ENCODE measurements at regions of chr15 and their contacts with region 1.

Region 1: GRCh38 chr15:40038638-40039543 is at the start of gene SRP14:
- DNase-seq: peak; percentile 89 to 95 (median 90)
- H3K4me3 ChIP-seq: peak within 1 kb of the TSS; percentile 42 to 97
- H3K4me3 Mint-ChIP-seq: peak within 1 kb of the TSS; percentile 96 to 100 (median 99)
- H3K27ac ChIP-seq: peak within 1 kb of the TSS; percentile 98
- H3K27ac Mint-ChIP-seq: peak within 1 kb of the TSS; percentile 87 to 99 (median 98)
- H3K4me1 ChIP-seq: peaks cover 24% of the 10 kb centered on the region
- H3K4me1 Mint-ChIP-seq: peaks cover 22 to 49% (median 33%) of the 10 kb centered on the region in 4 donors
- H3K27me3 ChIP-seq: no peaks in the 10 kb centered on the region
- H3K27me3 Mint-ChIP-seq: no peaks in the 10 kb centered on the region
- total RNA-seq, gene SRP14: 118 to 120 TPM

Region 2: GRCh38 chr15:39934397-39935071 is 104.4 kb before region 1 on chr15:
- CTCF ChIA-PET with region 1: no interaction called
- POLR2A ChIA-PET with region 1: no interaction called
- intact Hi-C with region 1: loop called (anchors 2 kb)
- DNase-seq: peak in 1 of 5 donors; percentile 5
- H3K4me3 ChIP-seq: peak overlapping the region; percentile 66 to 74
- H3K4me3 Mint-ChIP-seq: peak overlapping the region; percentile 88 to 99 (median 93)
- H3K27ac ChIP-seq: peak overlapping the region; percentile 36
- H3K27ac Mint-ChIP-seq: peak overlapping the region; percentile 10 to 92 (median 80)
- H3K4me1 ChIP-seq: peaks cover 17% of the 10 kb centered on the region
- H3K4me1 Mint-ChIP-seq: peaks cover 22 to 38% (median 25%) of the 10 kb centered on the region in 4 donors
- H3K27me3 ChIP-seq: no peaks in the 10 kb centered on the region
- H3K27me3 Mint-ChIP-seq: peaks cover 0 to 3% of the 10 kb centered on the region in 2 donors

Region 3: DNA sequence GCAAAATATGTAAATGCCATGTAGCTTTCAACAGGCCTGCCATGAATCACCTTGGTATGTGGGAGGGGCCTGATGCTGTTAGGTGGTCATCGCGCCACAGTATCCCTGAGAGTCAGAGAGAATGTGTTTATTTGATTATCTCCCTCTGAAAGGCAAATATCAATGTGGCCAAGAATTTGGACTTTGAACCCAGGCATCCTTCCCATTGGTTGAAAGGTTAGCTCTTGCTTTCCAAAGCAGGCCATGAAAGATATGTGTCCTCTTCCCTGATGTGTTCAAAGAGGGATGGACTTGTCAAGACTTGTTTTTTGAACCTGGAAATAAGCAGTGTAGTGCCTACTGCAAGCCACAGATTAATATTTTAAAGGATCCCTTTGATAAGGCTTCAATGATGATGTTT is 36.6 kb before region 1 on chr15:
- CTCF ChIA-PET with region 1: no interaction called
- POLR2A ChIA-PET with region 1: no interaction called
- intact Hi-C with region 1: no loop called
- DNase-seq: no peak
- H3K4me3 ChIP-seq: no peak overlapping the region
- H3K4me3 Mint-ChIP-seq: no peak overlapping the region
- H3K27ac ChIP-seq: no peak overlapping the region
- H3K27ac Mint-ChIP-seq: no peak overlapping the region
- H3K4me1 ChIP-seq: no peaks in the 10 kb centered on the region
- H3K4me1 Mint-ChIP-seq: no peaks in the 10 kb centered on the region
- H3K27me3 ChIP-seq: no peaks in the 10 kb centered on the region
- H3K27me3 Mint-ChIP-seq: no peaks in the 10 kb centered on the region

Region 4: GRCh38 chr15:40160689-40161688 is 122.1 kb after region 1 on chr15 and contains the start of gene BUB1B:
- CTCF ChIA-PET with region 1: interaction called, 3 read pairs
- POLR2A ChIA-PET with region 1: no interaction called
- intact Hi-C with region 1: loop called (anchors 1 kb)
- DNase-seq: peak; percentile 92 to 95 (median 93)
- H3K4me3 ChIP-seq: peak within 1 kb of the TSS; percentile 84 to 88
- H3K4me3 Mint-ChIP-seq: no peak within 1 kb of the TSS
- H3K27ac ChIP-seq: peak within 1 kb of the TSS; percentile 28
- H3K27ac Mint-ChIP-seq: no peak within 1 kb of the TSS
- H3K4me1 ChIP-seq: peaks cover 19% of the 10 kb centered on the region
- H3K4me1 Mint-ChIP-seq: peaks cover 0 to 3% (median 2%) of the 10 kb centered on the region in 4 donors
- H3K27me3 ChIP-seq: no peaks in the 10 kb centered on the region
- H3K27me3 Mint-ChIP-seq: no peaks in the 10 kb centered on the region
- total RNA-seq, gene BUB1B: 0.55 to 0.89 TPM